Endothelial cell of umbilical vein (primary cell): ENCODE measurements at regions of chr3 and their contacts with region 1.

Region 1: DNA sequence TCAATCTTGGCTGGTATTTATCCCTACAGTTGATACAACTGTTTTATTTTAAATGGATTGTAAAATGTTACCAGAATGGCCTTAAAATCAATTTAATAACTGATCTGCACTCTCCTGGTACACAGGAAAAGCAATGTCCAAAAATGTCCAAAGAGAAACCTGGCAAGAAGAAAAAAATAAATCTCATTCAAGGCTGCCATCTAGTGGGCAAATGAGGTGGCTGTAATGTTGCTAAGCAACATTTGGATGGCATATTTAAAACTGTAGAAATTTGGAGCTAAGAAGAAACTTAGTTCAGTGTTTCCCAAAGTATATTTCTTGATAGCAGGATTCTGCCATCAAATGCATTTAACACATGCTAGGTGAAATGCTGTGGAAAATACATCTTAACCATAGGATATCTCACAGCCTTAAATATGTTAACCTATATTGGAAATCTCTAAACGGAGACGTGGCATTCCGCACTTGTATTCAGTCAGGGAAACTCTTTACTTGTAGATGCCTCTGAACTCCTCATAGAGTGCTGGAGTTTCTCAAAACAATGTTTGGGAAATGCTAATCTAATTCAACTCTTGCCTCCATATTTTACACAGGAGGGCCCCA is 216.8 kb downstream of the ERC2 start:
- DNase-seq: peak; percentile 66
- H3K4me3 ChIP-seq: no peak overlapping the region
- H3K27ac ChIP-seq: no peak overlapping the region
- H3K4me1 ChIP-seq: no peaks in the 10 kb centered on the region
- H3K27me3 ChIP-seq: no peaks in the 10 kb centered on the region
- CTCF ChIP-seq: peak; percentile 46 to 49
- POLR2A ChIP-seq: no peak

Region 2: GRCh38 chr3:54853573-54854404 is 1397.7 kb before region 1 on chr3:
- CTCF ChIA-PET with region 1: interaction called, 27 read pairs
- POLR2A ChIA-PET with region 1: no interaction called
- dilution Hi-C with region 1: no loop called
- intact Hi-C with region 1: loop called (anchors 1 kb)
- DNase-seq: peak; percentile 38
- H3K4me3 ChIP-seq: no peak overlapping the region
- H3K27ac ChIP-seq: no peak overlapping the region
- H3K4me1 ChIP-seq: no peaks in the 10 kb centered on the region
- H3K27me3 ChIP-seq: no peaks in the 10 kb centered on the region
- CTCF ChIP-seq: peak; percentile 71 to 87
- POLR2A ChIP-seq: no peak

Region 3: DNA sequence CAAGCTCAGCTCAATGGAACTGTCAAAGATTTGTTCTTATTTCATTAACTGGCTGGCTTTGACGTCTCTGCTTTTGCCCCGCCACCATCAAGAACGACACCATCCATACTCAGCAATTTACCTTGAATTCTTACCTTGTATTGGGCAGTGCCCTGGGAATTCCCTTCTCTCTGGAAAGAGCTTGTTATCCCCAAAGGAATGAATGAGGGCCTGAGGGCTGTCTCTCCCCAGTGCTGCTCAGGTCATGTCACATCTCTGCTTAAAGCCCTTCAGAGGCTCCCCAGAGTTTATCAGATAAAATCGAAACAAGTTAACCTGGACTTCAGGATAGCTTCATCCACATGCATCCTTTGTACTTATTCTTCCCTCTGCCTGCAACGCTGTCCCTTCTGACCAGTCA is 758.5 kb before region 1 on chr3:
- CTCF ChIA-PET with region 1: interaction called, 98 read pairs
- POLR2A ChIA-PET with region 1: no interaction called
- dilution Hi-C with region 1: no loop called
- intact Hi-C with region 1: no loop called
- DNase-seq: no peak
- H3K4me3 ChIP-seq: no peak overlapping the region
- H3K27ac ChIP-seq: no peak overlapping the region
- H3K4me1 ChIP-seq: peaks cover 3% of the 10 kb centered on the region
- H3K27me3 ChIP-seq: peaks cover 34 to 40% of the 10 kb centered on the region in 2 experiments
- CTCF ChIP-seq: no peak
- POLR2A ChIP-seq: no peak

Region 4: DNA sequence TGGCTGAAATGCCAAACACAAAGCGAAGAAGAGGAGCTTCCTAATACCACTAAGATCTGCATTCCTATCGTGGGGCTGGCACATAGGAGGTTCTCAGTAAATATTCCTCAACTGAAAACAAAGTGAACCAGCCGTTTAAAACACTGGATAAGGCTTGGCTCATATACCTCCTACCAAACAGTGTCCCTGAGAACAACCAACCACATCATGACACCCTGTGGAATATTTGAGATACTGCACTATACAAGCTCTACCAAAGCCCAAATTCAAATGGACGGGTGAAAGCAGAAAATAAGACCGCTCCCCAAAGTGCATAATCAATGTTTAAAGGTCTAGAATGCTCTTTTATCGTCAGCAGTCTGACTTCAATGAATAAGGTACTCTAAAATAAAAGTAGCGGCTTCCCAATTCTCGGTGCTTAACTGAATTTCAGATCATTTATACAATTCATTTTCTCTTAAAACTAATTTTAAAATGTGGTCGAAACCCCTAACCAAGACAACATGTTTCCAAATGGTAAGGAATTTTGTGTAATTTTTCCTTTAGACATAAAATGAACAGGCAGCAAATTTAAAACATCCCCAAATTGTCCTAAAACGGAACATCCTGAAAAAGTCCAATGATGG is 209.0 kb before region 1 on chr3:
- CTCF ChIA-PET with region 1: interaction called, 12 read pairs
- POLR2A ChIA-PET with region 1: no interaction called
- dilution Hi-C with region 1: no loop called
- intact Hi-C with region 1: loop called (anchors 1 kb)
- DNase-seq: peak; percentile 44
- H3K4me3 ChIP-seq: no peak overlapping the region
- H3K27ac ChIP-seq: no peak overlapping the region
- H3K4me1 ChIP-seq: no peaks in the 10 kb centered on the region
- H3K27me3 ChIP-seq: no peaks in the 10 kb centered on the region
- CTCF ChIP-seq: peak in 1 of 2 donors; percentile 36
- POLR2A ChIP-seq: no peak

Region 5: GRCh38 chr3:56096999-56097398 is 154.4 kb before region 1 on chr3:
- CTCF ChIA-PET with region 1: no interaction called
- POLR2A ChIA-PET with region 1: no interaction called
- dilution Hi-C with region 1: no loop called
- intact Hi-C with region 1: no loop called
- DNase-seq: no peak
- H3K4me3 ChIP-seq: no peak overlapping the region
- H3K27ac ChIP-seq: no peak overlapping the region
- H3K4me1 ChIP-seq: peaks cover 8% of the 10 kb centered on the region
- H3K27me3 ChIP-seq: no peaks in the 10 kb centered on the region
- CTCF ChIP-seq: no peak
- POLR2A ChIP-seq: no peak

Region 6: GRCh38 chr3:56291244-56291680 is 39.8 kb after region 1 on chr3:
- CTCF ChIA-PET with region 1: interaction called, 28 read pairs
- POLR2A ChIA-PET with region 1: no interaction called
- dilution Hi-C with region 1: no loop called
- intact Hi-C with region 1: no loop called
- DNase-seq: peak; percentile 98
- H3K4me3 ChIP-seq: no peak overlapping the region
- H3K27ac ChIP-seq: peak overlapping the region; percentile 90
- H3K4me1 ChIP-seq: peaks cover 24% of the 10 kb centered on the region
- H3K27me3 ChIP-seq: no peaks in the 10 kb centered on the region
- CTCF ChIP-seq: no peak
- POLR2A ChIP-seq: no peak

Region 7: DNA sequence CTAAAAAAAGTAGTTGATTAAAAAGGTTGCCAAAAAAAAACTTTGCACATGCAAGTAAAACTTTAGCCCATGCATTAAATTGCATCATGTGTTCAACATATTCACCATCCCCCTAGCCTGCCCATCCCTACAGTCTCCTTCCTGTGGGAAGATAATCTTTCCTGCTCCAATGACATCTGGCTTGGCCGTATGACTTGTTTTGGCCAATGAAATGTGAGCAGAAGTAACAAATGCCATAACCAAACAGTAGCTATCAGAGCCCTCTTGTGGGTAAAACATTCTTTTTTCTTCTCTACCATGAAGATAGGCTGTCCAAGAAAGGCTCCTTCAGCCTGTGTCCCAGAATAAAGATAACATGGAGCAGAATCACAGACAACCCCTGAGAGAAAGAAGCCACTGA is 201.6 kb after region 1 on chr3:
- CTCF ChIA-PET with region 1: no interaction called
- POLR2A ChIA-PET with region 1: no interaction called
- dilution Hi-C with region 1: no loop called
- intact Hi-C with region 1: loop called (anchors 5 kb)
- DNase-seq: no peak
- H3K4me3 ChIP-seq: no peak overlapping the region
- H3K27ac ChIP-seq: no peak overlapping the region
- H3K4me1 ChIP-seq: no peaks in the 10 kb centered on the region
- H3K27me3 ChIP-seq: no peaks in the 10 kb centered on the region
- CTCF ChIP-seq: no peak
- POLR2A ChIP-seq: no peak

Region 8: DNA sequence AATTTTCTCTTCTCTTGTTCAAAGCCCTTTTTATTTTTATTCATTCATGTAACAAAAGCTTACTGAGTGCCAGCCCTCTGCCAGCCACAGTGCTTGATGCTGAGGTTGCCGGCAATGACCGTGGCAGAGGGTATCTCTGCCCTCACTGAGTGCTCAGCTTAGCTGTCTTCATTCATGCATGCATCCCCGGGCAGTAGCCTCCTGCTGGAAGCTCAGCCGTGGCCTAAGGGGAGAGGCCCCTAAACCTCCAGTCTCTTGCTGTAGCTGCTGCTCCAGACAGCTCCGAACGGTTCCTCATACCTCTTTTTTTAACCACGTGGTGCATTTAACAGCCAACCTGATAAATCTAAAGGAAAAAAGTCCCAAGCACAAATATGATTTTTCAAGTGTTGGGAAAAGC is 270.9 kb after region 1 on chr3:
- CTCF ChIA-PET with region 1: no interaction called
- POLR2A ChIA-PET with region 1: no interaction called
- dilution Hi-C with region 1: no loop called
- intact Hi-C with region 1: no loop called
- DNase-seq: no peak
- H3K4me3 ChIP-seq: no peak overlapping the region
- H3K27ac ChIP-seq: no peak overlapping the region
- H3K4me1 ChIP-seq: no peaks in the 10 kb centered on the region
- H3K27me3 ChIP-seq: peaks cover 8 to 10% of the 10 kb centered on the region in 2 experiments
- CTCF ChIP-seq: no peak
- POLR2A ChIP-seq: no peak